ENCODE measurements at regions of chr17 and their contacts with region 1.

Region 1: DNA sequence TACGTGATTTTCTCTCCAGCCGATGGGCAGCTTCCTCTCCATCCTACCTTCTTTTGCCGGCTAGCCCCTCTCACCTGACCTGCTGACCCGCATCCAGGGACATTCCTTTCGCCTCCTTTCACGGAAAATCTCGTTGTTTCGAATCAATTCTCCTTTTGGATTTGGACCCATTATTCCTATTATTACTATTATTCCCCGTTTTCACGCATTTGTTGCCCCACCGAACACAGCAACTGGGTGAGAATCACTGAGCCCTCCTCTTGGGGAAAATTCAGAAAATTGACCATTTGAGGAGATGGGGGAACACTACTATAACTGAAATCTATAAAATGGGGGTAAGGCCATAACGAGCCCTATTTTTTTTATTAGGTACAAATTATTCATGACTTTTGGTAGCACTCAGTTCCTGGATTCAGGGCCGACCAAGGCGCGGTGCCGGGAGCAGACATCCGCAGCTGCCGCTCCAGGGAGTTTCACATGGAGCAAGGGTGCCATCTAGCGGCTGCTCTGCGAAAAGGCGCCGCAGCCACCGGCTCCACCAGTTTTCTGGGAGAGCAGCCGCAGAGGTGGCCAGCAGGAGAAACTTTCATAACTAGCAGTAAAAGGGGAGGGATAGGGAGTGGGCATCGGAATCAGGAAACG is 3.3 kb upstream of the HOXB8 start:
- DNase-seq: peak; percentile 73 to 89
- H3K4me3 ChIP-seq: no peak overlapping the region
- H3K27ac ChIP-seq: no peak overlapping the region
- H3K4me1 ChIP-seq: peaks cover 9% of the 10 kb centered on the region; the same call in 1 of the 2 replicates
- H3K27me3 ChIP-seq: no peaks in the 10 kb centered on the region
- CTCF ChIP-seq: peak; percentile 98

Region 2: GRCh38 chr17:47941236-47941994 is 677.0 kb before region 1 on chr17 and contains the start of gene PNPO:
- CTCF ChIA-PET with region 1: no interaction called
- POLR2A ChIA-PET with region 1: no interaction called
- intact Hi-C with region 1: loop called (anchors 10 kb)
- DNase-seq: peak; percentile 88 to 96
- H3K4me3 ChIP-seq: peak within 1 kb of the TSS; percentile 87
- H3K27ac ChIP-seq: peak within 1 kb of the TSS; percentile 33
- H3K4me1 ChIP-seq: peaks cover 57% of the 10 kb centered on the region
- H3K27me3 ChIP-seq: no peaks in the 10 kb centered on the region
- CTCF ChIP-seq: no peak; the same call in 1 of the 2 replicates
- total RNA-seq, gene PNPO: 40.2 and 44.1 TPM in 2 replicates

Region 3: DNA sequence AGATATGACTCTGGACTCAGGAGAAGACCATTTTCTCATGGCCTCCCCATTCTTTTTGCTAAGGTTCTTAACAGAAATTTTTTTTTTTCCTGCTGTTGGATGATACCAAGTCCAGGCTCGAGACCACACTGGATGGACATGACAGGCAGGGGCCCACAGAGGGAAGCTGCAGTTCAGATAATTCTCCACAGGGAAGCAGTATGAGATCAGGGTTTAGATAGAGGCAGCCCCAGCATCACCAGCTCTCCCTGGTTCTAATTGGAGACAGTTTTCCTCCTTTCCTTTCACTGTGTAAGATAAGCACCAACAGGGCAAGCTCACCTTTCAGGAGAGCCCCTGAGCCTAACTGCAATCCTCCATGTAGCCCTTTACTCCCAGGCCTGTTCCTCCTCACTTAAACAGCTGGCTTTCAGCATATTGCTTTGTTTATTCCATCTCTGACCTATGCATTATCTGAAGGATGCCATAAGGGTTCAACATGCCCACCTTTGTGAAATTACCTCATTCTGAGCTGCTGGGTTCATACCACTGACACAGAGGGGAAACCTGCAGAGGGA is 402.7 kb before region 1 on chr17:
- CTCF ChIA-PET with region 1: interaction called, 6 read pairs
- POLR2A ChIA-PET with region 1: no interaction called
- intact Hi-C with region 1: loop called (anchors 1 kb)
- DNase-seq: peak; percentile 40 to 52
- H3K4me3 ChIP-seq: no peak overlapping the region
- H3K27ac ChIP-seq: no peak overlapping the region
- H3K4me1 ChIP-seq: no peaks in the 10 kb centered on the region
- H3K27me3 ChIP-seq: no peaks in the 10 kb centered on the region
- CTCF ChIP-seq: peak; percentile 88

Region 4: GRCh38 chr17:48307814-48308411 is 310.5 kb before region 1 on chr17:
- CTCF ChIA-PET with region 1: no interaction called
- POLR2A ChIA-PET with region 1: no interaction called
- intact Hi-C with region 1: loop called (anchors 5 kb)
- DNase-seq: peak; percentile 41 to 65
- H3K4me3 ChIP-seq: no peak overlapping the region
- H3K27ac ChIP-seq: no peak overlapping the region
- H3K4me1 ChIP-seq: no peaks in the 10 kb centered on the region
- H3K27me3 ChIP-seq: no peaks in the 10 kb centered on the region
- CTCF ChIP-seq: peak; percentile 91

Region 5: DNA sequence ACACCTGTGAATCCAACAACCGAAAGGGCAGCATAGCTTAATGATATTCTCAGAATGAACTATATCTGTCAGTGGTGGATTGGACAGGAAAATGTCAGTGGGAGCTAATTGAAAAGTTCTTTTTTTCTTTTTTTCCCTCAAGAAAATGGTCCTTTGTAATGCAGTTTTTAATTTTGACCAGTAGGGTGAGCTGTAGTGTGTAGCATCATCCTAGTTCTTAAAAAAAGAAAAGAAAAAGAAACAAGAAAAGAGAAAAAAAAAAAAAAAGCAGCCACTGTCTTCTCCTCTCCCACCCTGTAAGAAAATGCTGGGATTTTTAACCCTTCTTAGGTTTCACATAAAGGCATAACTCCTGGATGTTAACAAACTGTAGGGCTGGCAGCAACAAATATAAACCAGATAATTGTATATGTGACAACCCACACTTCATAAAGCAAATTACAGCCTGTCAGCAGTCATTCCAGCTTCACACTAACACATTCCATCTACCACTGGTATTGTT is 266.5 kb before region 1 on chr17:
- CTCF ChIA-PET with region 1: interaction called, 11 read pairs
- POLR2A ChIA-PET with region 1: no interaction called
- intact Hi-C with region 1: loop called (anchors 5 kb)
- DNase-seq: peak in 1 of 2 experiments; percentile 39
- H3K4me3 ChIP-seq: no peak overlapping the region
- H3K27ac ChIP-seq: no peak overlapping the region
- H3K4me1 ChIP-seq: no peaks in the 10 kb centered on the region; the same call in 1 of the 2 replicates
- H3K27me3 ChIP-seq: no peaks in the 10 kb centered on the region
- CTCF ChIP-seq: peak; percentile 89